H1 (cell line): ENCODE measurements at regions of chr20 and their contacts with region 1.

Region 1: DNA sequence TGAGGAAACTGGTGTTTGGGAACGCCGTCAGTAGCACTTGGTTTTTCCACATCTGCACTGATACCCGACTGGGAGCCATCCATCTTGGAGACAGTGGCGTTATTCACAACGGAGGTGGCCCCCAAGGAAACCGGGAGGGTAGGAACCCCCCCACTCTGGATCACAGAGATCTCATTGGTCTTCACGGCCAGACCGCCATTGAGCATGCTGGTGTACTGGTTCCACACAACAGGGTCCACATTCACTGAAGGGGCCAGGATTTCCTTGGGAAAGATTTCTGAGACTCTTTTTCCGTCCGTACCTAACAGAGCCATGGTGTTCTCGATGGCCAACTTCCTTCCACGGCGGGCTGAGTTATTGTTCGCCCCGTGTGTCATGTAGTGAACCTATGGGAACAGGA is 16.1 kb upstream of the ATP9A start:
- DNase-seq: no peak
- H3K4me3 ChIP-seq: no peak overlapping the region
- H3K27ac ChIP-seq: peak overlapping the region; percentile 41; the same call in 1 of the 2 replicates
- H3K4me1 ChIP-seq: no peaks in the 10 kb centered on the region
- H3K27me3 ChIP-seq: no peaks in the 10 kb centered on the region
- CTCF ChIP-seq: no peak
- EP300 ChIP-seq: no peak
- POLR2A ChIP-seq: no peak; a peak in 1 of 3 replicates
- RAD21 ChIP-seq: no peak

Region 2: GRCh38 chr20:51767010-51767558 is 17.2 kb before region 1 on chr20:
- CTCF ChIA-PET with region 1: no interaction called
- POLR2A ChIA-PET with region 1: interaction called, 12 read pairs
- DNase-seq: peak; percentile 67 to 88
- H3K4me3 ChIP-seq: peak overlapping the region; percentile 47 to 73 (median 70)
- H3K27ac ChIP-seq: peak overlapping the region; percentile 26; the same call in 1 of the 2 replicates
- H3K4me1 ChIP-seq: peaks cover 0 to 2% (median 0%) of the 10 kb centered on the region in 4 experiments; a peak in 1 of 7 replicates
- H3K27me3 ChIP-seq: no peaks in the 10 kb centered on the region; a peak in 1 of 7 replicates
- CTCF ChIP-seq: no peak
- EP300 ChIP-seq: no peak
- POLR2A ChIP-seq: peak in 1 of 2 experiments; percentile 35; a peak in 1 of 3 replicates
- RAD21 ChIP-seq: no peak